ENCODE measurements at regions of chr5 and their contacts with region 1.

Region 1: GRCh38 chr5:80711938-80712337 is 57.2 kb upstream of the DHFR start:
- DNase-seq: peak; percentile 19
- ATAC-seq: peak; percentile 99
- H3K4me3 ChIP-seq: no peak overlapping the region
- H3K27ac ChIP-seq: no peak overlapping the region
- H3K4me1 ChIP-seq: no peaks in the 10 kb centered on the region
- H3K27me3 ChIP-seq: no peaks in the 10 kb centered on the region
- CTCF ChIP-seq: peak; percentile 59 to 77 (median 62); a peak in 5 of 6 replicates
- POLR2A ChIP-seq: no peak
- RAD21 ChIP-seq: peak; percentile 78

Region 2: GRCh38 chr5:81045389-81045807 is 333.5 kb after region 1 on chr5:
- CTCF ChIA-PET with region 1: no interaction called
- POLR2A ChIA-PET with region 1: no interaction called
- RAD21 ChIA-PET with region 1: no interaction called
- intact Hi-C with region 1: no loop called
- DNase-seq: no peak
- ATAC-seq: no peak
- H3K4me3 ChIP-seq: no peak overlapping the region
- H3K27ac ChIP-seq: no peak overlapping the region
- H3K4me1 ChIP-seq: no peaks in the 10 kb centered on the region
- H3K27me3 ChIP-seq: peaks cover 5% of the 10 kb centered on the region; the same call in 1 of the 2 replicates
- CTCF ChIP-seq: no peak
- POLR2A ChIP-seq: no peak
- RAD21 ChIP-seq: no peak

Region 3: DNA sequence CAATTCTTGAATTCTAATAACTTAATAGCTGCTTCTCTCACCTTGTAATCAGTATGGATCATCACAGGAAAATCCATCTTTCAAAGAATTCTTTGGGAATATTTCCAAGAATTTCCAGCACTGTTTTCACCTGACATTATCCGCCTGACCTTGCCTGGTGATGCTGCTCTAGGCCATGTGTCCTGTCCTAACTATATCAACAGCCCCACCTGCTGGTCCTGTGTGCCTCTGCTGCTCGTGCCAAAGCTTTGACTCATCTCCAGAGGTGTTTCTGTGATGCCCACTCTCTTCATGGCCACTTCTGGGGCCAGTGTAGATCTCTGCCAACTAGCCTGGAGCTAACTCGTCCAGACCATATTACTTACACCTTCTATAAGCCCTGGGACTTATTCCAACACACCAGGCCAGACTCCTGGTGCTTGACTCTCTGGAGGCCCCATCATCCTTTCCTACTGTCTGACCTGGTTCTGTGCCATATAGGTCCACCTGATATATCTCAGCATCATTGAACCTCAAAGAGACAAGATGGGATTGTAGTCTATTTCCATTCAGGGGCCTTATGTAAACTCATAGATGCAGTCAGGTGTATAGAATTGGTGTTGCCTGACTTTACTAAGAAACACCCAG is 453.7 kb after region 1 on chr5:
- CTCF ChIA-PET with region 1: interaction called, 6 read pairs
- POLR2A ChIA-PET with region 1: no interaction called
- RAD21 ChIA-PET with region 1: interaction called in 1 of 2 experiments, 4 read pairs
- intact Hi-C with region 1: loop called (anchors 2 kb)
- DNase-seq: peak; percentile 52
- ATAC-seq: peak; percentile 100
- H3K4me3 ChIP-seq: no peak overlapping the region
- H3K27ac ChIP-seq: no peak overlapping the region
- H3K4me1 ChIP-seq: no peaks in the 10 kb centered on the region
- H3K27me3 ChIP-seq: no peaks in the 10 kb centered on the region
- CTCF ChIP-seq: peak; percentile 71 to 93 (median 92)
- POLR2A ChIP-seq: no peak
- RAD21 ChIP-seq: peak; percentile 85

Region 4: DNA sequence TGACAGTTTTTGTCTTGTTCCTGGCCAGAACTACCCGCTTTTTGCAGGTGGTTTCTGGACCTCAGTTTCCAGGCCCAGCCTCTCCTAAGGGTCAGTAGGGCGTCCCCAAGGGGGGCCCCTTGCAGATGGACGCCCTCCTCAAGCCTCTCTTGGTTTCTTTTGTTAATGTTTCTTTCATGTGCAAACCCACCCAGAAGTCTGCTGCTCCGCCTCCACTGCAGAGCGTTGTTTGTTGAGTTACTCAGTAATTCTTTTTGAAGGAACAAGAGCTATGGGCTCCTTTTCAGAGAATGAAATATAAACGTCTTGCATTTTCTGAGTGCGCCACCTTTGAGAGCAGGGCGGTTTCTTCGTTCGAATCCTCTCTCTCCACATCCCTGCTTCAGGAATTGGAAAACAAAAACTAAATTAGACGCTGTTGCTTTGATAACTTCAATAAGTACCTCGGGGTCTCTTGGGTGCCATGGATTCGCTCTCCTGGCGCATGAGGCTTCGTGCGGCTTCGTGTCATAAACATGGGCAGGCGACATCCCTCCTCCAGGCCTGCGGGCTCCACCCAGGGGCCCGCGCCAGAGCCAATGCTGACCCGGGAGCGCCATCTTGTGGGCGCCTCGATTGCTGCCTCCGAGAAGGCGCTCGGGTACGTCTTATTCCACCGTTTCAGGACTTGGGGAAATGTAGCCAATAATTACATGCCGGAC is 482.8 kb after region 1 on chr5:
- CTCF ChIA-PET with region 1: no interaction called
- POLR2A ChIA-PET with region 1: no interaction called
- RAD21 ChIA-PET with region 1: no interaction called
- intact Hi-C with region 1: loop called (anchors 2 kb)
- DNase-seq: peak; percentile 68
- ATAC-seq: peak; percentile 99
- H3K4me3 ChIP-seq: no peak overlapping the region
- H3K27ac ChIP-seq: no peak overlapping the region
- H3K4me1 ChIP-seq: peaks cover 0 to 6% of the 10 kb centered on the region in 2 experiments; a peak in 1 of 4 replicates
- H3K27me3 ChIP-seq: no peaks in the 10 kb centered on the region
- CTCF ChIP-seq: peak; percentile 80 to 95 (median 94)
- POLR2A ChIP-seq: no peak
- RAD21 ChIP-seq: peak; percentile 94

Region 5: GRCh38 chr5:81254886-81255557 is 543.1 kb after region 1 on chr5:
- CTCF ChIA-PET with region 1: no interaction called
- POLR2A ChIA-PET with region 1: no interaction called
- RAD21 ChIA-PET with region 1: no interaction called
- intact Hi-C with region 1: no loop called
- DNase-seq: no peak
- ATAC-seq: no peak
- H3K4me3 ChIP-seq: no peak overlapping the region
- H3K27ac ChIP-seq: no peak overlapping the region
- H3K4me1 ChIP-seq: peaks cover 6 to 11% of the 10 kb centered on the region in 2 experiments
- H3K27me3 ChIP-seq: no peaks in the 10 kb centered on the region
- CTCF ChIP-seq: no peak
- POLR2A ChIP-seq: no peak
- RAD21 ChIP-seq: no peak

Measured in HCT116 (cell line).